ENCODE measurements at regions of chrX and their contacts with region 1.

Region 1: GRCh38 chrX:70434352-70434866 is 10.2 kb upstream of the DLG3 start:
- DNase-seq: peak; percentile 41
- ATAC-seq: peak; percentile 93
- H3K4me3 ChIP-seq: peak overlapping the region; percentile 75 to 93
- H3K27ac ChIP-seq: peak overlapping the region; percentile 80
- H3K4me1 ChIP-seq: peaks cover 7% of the 10 kb centered on the region
- H3K27me3 ChIP-seq: no peaks in the 10 kb centered on the region
- CTCF ChIP-seq: no peak

Region 2: GRCh38 chrX:69556060-69557011 is 878.1 kb before region 1 on chrX:
- CTCF ChIA-PET with region 1: interaction called, 16 read pairs
- POLR2A ChIA-PET with region 1: no interaction called
- in situ Hi-C with region 1: no loop called
- intact Hi-C with region 1: no loop called
- DNase-seq: no peak
- ATAC-seq: no peak
- H3K4me3 ChIP-seq: no peak overlapping the region
- H3K27ac ChIP-seq: no peak overlapping the region
- H3K4me1 ChIP-seq: no peaks in the 10 kb centered on the region
- H3K27me3 ChIP-seq: no peaks in the 10 kb centered on the region
- CTCF ChIP-seq: no peak

Region 3: GRCh38 chrX:70592091-70592490 is 157.7 kb after region 1 on chrX:
- CTCF ChIA-PET with region 1: no interaction called
- POLR2A ChIA-PET with region 1: no interaction called
- in situ Hi-C with region 1: no loop called
- intact Hi-C with region 1: no loop called
- DNase-seq: peak; percentile 2
- ATAC-seq: no peak
- H3K4me3 ChIP-seq: no peak overlapping the region
- H3K27ac ChIP-seq: no peak overlapping the region
- H3K4me1 ChIP-seq: no peaks in the 10 kb centered on the region
- H3K27me3 ChIP-seq: no peaks in the 10 kb centered on the region
- CTCF ChIP-seq: no peak

Region 4: DNA sequence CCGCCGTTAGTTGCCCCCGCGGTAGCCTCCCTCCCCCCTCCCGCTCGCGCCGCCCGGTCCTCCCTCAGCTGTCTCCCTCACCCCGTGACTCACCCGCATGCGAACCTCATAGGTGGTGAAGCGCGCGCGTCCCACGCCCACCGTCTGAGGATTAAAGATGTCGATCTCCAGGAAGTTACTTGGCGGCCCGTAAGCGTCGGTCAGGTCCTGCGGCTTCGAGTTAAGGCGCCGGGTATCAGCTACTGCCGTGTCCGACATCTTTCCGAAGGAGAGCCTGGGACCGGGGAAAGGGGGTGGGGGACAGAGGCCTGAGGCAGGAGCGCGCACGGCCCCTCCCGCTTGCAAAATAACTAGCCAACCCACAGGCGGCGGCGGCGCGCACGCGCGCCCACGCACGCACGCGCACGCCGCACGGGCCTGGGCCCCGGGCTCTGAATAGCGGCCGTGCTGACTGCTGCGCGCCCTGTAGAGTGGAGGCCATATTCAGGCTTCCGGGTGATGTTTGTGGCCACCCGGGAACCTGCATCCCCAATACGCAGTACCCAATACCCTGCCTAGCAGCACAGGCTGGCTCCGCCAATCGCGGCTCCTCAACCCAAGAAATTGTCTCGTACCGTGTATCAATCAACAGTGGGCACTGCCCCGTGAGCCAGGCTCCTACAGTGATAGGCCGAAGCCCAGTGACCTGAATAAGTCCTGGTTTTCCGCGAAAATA is 633.8 kb after region 1 on chrX and contains the start of gene SNX12:
- CTCF ChIA-PET with region 1: no interaction called
- POLR2A ChIA-PET with region 1: no interaction called
- in situ Hi-C with region 1: no loop called
- intact Hi-C with region 1: no loop called
- DNase-seq: peak; percentile 76
- ATAC-seq: peak; percentile 97
- H3K4me3 ChIP-seq: peak within 1 kb of the TSS; percentile 58 to 87
- H3K27ac ChIP-seq: peak within 1 kb of the TSS; percentile 94
- H3K4me1 ChIP-seq: 0 out of 2 replicates have a peak, but pooled peaks cover 3% of the 10 kb centered on the region
- H3K27me3 ChIP-seq: peaks cover under 1% of the 10 kb centered on the region; the same call in 1 of the 2 replicates
- CTCF ChIP-seq: no peak
- total RNA-seq, gene SNX12: 117 TPM